Left cardiac atrium (tissue), 4 donors: ENCODE measurements at regions of chr3 and their contacts with region 1.

Region 1: DNA sequence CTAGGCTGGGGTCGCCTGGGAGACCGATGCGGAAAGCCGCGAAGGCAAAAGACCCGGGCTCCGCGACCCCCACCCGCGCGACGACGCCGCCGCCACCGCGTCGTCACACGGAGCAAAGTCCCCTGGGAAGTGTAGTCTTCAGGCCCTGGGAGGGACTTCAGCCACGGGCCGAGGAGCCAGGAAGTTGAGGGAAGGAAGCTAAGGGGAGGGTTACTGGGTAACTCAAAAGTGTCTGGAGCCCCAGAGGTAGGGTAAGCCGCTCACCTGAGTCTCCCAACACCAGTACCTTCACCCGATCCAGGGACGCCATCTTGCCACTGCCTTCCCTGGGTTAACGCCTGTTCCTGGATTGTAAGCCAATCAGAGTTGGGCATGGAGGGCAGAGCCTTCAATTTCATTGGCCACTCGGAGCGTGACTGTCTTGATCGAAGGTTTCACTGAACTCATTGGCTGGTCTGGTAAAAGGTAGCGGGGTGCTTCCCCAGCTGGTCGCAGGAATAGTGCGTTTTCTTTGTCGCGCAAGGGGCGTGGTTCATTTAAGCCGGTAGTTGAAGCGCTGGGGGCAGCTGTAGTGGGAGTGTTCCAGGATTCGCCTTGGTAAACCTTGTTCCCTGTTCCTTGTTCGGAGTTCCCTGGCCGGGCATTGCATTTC is at the starts of genes GTF2E1 and RABL3:
- DNase-seq: peak; percentile 96
- ATAC-seq: peak; percentile 100
- total RNA-seq, gene GTF2E1: 13.6 to 13.7 TPM
- total RNA-seq, gene RABL3: 15.2 to 19.4 TPM

Region 2: GRCh38 chr3:120596116-120596852 is 146.0 kb before region 1 on chr3 and contains the start of gene NDUFB4:
- intact Hi-C with region 1: loop called in 1 of 2 experiments (anchors 10 kb)
- DNase-seq: peak; percentile 99
- ATAC-seq: peak; percentile 100
- total RNA-seq, gene NDUFB4: 285 to 331 TPM

Region 3: GRCh38 chr3:120855665-120856437 is 113.5 kb after region 1 on chr3:
- intact Hi-C with region 1: no loop called
- DNase-seq: peak; percentile 56
- ATAC-seq: peak; percentile 78 to 99